Motor neuron (in vitro differentiated cells): ENCODE measurements at regions of chr18 and their contacts with region 1.

Region 1: DNA sequence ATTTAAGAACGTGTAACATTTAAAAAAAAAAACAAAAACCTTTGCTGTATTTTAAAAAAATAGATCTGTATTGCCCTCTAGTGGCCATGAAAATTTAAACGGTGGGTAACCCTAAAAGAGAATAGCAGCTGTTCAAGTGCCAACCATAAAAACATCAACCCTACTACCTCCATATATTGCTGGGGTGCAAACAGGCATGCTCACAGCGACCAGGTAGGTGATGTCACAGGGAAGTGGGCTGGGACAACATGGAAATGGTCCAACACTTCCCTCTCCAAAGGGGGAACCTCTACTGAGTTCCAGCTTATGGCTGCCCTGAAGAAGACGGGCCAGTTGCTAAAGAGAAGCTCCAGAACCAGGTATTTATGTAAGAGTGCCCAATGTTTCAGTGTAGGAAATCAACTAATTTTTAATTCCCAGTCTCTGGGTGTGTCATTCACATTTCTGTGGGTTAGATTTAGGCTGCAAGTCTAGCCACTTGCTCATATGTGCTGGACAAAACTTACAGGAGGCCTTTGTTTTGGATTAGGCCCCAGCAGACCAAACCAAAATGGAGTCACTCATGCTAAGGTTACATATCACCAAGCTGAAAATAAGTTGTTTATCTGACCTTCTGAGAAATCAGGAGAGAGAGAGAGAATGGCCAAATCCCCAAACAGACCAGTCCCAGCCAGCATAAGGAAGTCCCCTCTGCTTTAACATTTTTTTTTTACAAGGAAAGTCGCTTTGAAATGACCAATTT is 54.5 kb downstream of the SKA1 start:
- ATAC-seq: peak in 2 of 8 experiments; percentile 29 to 37
- H3K4me3 ChIP-seq: no peak overlapping the region
- H3K27ac ChIP-seq: no peak overlapping the region
- H3K4me1 ChIP-seq: no peaks in the 10 kb centered on the region

Region 2: DNA sequence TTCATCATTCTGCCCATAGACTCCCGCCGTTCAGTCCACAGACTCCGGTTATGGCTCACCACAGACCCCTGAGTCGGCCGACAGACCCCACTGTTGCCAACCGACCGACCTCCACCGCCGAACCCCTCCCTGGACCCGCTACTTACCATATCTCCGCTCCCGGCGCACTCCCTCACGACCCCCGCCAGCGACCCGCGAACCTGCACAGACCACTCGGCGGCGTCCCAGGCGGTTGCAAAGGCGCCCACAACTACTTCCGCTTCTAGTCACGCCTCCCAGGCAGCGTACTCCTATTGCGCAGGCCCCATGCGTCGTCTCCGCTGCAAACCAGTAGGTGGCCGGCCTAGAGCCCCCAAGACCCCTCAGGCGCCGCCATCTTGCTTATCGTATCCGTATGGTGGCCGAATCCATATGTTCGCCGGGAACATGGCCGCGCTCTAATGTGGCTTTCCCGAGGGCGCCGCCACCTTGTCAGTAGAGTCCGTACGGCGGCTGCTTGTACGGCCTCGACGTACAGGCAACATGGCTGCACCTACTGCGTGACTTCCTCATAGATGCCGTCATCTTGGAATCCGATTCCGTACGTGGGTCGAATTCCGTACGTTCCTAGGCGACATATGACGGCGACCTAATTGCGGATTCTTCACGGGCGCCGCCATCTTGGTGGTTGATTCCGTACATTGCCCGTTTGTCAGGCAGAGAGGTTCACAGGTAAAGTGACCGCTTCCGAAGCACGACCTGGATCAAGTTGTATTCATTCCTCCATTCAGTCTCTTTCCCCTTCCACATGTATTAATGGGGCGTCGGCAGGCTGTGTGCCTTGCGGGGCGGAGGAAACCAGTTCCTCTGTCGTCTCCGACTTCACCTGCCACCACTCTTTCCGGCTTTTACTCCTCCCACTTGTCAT is 141.7 kb before region 1 on chr18 and contains the start of gene CXXC1:
- in situ Hi-C with region 1: loop called in 1 of 9 experiments (anchors 25 kb)
- ATAC-seq: peak; percentile 86 to 95 (median 88)
- H3K4me3 ChIP-seq: peak within 1 kb of the TSS; percentile 59 to 90 (median 66)
- H3K27ac ChIP-seq: peak within 1 kb of the TSS; percentile 75 to 81
- H3K4me1 ChIP-seq: peaks cover 5 to 7% of the 10 kb centered on the region in 2 donors
- total RNA-seq, gene CXXC1: 27.0 to 69.3 (median 50.5) TPM